Thyroid gland (tissue), 4 donors: ENCODE measurements at regions of chr6 and their contacts with region 1.

Region 1: GRCh38 chr6:19873031-19873430 is 35.9 kb downstream of the ID4 start:
- DNase-seq: no peak
- H3K4me3 ChIP-seq: no peak overlapping the region
- H3K27ac ChIP-seq: no peak overlapping the region
- H3K4me1 ChIP-seq: no peaks in the 10 kb centered on the region
- H3K27me3 ChIP-seq: no peaks in the 10 kb centered on the region
- CTCF ChIP-seq: no peak
- POLR2A ChIP-seq: no peak

Region 2: DNA sequence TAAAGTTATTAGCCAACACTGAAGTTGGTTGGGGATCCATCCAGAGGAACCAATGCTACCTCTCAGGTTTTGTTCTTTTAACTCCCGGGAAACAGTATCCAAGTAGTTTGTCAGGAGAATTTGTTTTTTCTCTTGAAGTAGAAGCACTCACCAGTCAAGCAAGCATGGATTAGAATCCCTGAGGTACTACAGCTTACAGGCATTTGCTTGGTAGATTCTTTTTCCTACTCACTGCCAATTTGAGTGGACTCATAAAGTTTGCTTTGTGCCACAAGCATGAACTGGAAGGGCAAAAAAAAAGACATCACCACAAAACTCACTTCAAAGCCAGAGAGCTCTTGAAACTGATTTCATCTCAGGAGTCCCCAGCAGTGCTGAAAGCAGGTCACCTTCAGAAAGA is 171.9 kb after region 1 on chr6:
- intact Hi-C with region 1: loop called (anchors 10 kb)
- DNase-seq: peak; percentile 40 to 43
- H3K4me3 ChIP-seq: no peak overlapping the region
- H3K27ac ChIP-seq: peak overlapping the region; percentile 87 to 88 (median 87)
- H3K4me1 ChIP-seq: peaks cover 29 to 44% of the 10 kb centered on the region in 2 donors
- H3K27me3 ChIP-seq: no peaks in the 10 kb centered on the region
- CTCF ChIP-seq: no peak
- POLR2A ChIP-seq: peak in 1 of 2 donors; percentile 41